ENCODE measurements at regions of chr5 and their contacts with region 1.

Region 1: GRCh38 chr5:137575847-137576246 is 76.7 kb upstream of the SPOCK1 start:
- DNase-seq: peak; percentile 95
- ATAC-seq: peak; percentile 88
- H3K4me3 ChIP-seq: no peak overlapping the region
- H3K27ac ChIP-seq: peak overlapping the region; percentile 57
- H3K4me1 ChIP-seq: peaks cover 33% of the 10 kb centered on the region
- H3K27me3 ChIP-seq: no peaks in the 10 kb centered on the region
- CTCF ChIP-seq: no peak

Region 2: GRCh38 chr5:137560414-137560813 is 15.4 kb before region 1 on chr5:
- CTCF ChIA-PET with region 1: no interaction called
- POLR2A ChIA-PET with region 1: no interaction called
- intact Hi-C with region 1: loop called (anchors 2 kb)
- DNase-seq: peak; percentile 76
- ATAC-seq: peak; percentile 97
- H3K4me3 ChIP-seq: no peak overlapping the region
- H3K27ac ChIP-seq: peak overlapping the region; percentile 40; the same call in 1 of the 2 replicates
- H3K4me1 ChIP-seq: peaks cover 19% of the 10 kb centered on the region
- H3K27me3 ChIP-seq: peaks cover 4% of the 10 kb centered on the region; the same call in 1 of the 2 replicates
- CTCF ChIP-seq: no peak